Body of pancreas (tissue), 4 donors: ENCODE measurements at regions of chr20 and their contacts with region 1.

Region 1: DNA sequence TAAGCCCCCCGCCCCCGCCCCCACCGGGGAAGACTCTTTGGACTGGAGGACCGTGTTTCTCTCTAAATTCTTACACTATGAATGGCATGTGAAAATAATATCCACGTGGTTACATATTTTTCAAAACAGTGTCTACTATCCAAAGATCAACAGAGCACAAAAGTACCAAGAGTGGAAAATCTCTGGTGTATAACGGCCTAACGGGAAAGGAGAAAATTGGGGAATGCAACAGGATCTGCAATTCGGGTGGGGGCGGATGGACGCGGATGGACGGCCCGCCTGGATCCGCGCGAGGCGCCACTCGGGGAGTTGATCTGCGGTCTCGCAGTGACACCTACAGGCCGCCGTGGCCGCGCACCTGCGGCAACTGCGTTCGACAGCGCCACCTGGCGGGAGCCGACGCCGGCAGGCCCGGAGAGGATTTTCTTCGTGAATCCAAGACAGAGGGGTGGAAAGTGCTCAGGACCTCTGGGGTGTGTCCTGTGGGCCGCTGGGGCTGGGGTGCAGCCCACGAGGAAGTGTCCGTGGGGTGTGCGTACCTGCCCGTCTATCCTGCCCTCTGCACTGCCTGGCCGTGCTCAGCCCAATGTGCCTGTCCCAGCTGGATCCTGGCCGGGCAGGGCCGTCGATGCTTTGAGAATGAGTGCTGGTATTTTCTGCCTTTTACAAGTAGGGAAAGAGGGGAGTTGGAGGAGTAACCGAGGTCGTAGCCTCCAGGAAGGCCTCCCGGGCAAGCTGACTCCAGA is 18.6 kb downstream of the ANKRD60 start:
- DNase-seq: peak; percentile 76 to 87 (median 84)
- ATAC-seq: peak; percentile 85
- H3K4me3 ChIP-seq: no peak overlapping the region
- H3K27ac ChIP-seq: no peak overlapping the region
- H3K4me1 ChIP-seq: peaks cover 10% of the 10 kb centered on the region
- H3K27me3 ChIP-seq: no peaks in the 10 kb centered on the region
- CTCF ChIP-seq: peak; percentile 100
- POLR2A ChIP-seq: no peak

Region 2: DNA sequence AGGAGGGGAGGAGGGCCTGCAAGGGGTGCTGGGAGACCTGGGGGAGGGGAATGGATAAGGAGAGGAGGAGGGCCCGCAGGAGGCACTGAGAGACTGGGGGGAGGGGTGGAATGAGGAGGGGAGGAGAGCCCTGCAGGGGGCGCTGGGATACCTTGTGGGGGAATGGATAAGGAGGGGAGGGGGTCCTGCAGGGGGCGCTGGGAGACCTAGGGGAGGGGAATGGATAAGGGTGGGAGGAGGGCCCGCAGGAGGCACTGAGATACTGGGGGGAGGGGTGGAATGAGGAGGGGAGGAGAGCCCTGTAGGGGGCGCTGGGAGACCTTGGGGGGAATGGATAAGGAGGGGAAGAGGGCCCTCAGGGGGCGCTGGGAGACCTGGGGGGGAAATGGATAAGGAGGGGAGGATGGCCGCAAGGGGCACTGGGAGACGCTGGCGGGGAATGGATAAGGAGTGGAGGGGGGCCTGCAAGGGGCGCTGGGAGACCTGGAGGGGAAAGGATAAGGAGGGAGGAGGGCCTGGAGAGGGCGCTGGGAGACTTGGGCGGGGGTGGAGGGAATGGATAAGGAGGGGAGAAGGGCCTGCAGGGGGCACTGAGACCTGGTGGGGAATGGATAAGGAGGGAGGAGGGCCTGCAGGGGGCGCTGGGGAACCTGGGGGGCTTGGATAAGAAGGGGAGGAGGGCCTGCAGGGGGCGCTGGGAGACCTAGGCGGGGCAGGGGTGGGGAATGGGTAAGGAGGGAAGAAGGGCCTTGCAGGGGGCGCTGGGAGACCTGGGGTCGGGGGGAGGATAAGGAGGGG is 683.5 kb before region 1 on chr20:
- intact Hi-C with region 1: loop called (anchors 10 kb)
- DNase-seq: no peak
- ATAC-seq: no peak
- H3K4me3 ChIP-seq: no peak overlapping the region
- H3K27ac ChIP-seq: no peak overlapping the region
- H3K4me1 ChIP-seq: no peaks in the 10 kb centered on the region
- H3K27me3 ChIP-seq: no peaks in the 10 kb centered on the region
- CTCF ChIP-seq: no peak
- POLR2A ChIP-seq: no peak

Region 3: DNA sequence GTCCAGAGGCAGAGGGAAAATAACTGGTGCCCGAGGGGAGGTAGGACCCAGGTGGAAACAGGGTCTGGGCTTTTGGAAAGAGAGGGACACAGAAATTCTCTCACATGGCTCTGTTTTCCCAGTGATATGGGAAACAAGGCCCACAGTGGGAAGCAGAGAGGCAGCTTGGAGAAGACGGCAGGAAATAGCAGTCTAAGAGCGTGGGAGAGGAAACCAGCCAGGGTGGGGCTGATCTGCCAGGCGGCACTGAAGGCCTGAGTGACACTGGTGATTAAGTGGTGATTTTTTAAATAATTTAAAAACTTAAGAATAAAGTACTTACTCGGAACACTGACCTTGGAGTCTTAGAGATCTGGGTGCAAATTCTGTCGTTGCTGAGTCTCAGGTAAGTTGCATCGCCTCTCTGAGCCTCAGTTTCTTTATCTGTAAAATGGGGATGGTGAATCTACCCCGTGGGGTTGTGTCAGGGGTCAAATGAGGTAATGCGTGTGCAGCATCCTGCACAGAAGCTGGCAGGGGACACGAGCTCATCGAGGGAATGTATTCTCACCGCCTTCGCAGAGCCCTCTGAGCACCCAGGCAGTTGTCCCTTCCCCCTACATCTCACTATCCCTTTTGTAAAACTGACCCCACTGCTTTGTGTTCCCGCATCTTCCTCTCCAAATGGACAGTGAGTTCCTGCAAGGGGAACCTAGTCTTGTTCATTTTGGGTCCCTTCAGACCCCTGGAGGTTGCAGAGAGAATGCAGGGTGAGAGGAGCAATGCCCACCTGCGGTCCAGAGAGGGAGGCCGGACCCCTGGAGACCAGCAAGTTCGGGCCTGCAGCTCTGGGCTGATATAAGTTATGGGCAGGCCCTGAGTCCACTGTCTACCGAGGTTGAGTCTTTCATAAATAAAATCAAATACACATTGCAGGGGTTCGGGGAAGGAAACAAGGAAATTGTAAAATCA is 271.4 kb before region 1 on chr20:
- intact Hi-C with region 1: no loop called
- DNase-seq: no peak
- ATAC-seq: no peak
- H3K4me3 ChIP-seq: no peak overlapping the region
- H3K27ac ChIP-seq: no peak overlapping the region
- H3K4me1 ChIP-seq: peaks cover 11% of the 10 kb centered on the region
- H3K27me3 ChIP-seq: no peaks in the 10 kb centered on the region
- CTCF ChIP-seq: no peak
- POLR2A ChIP-seq: no peak